ENCODE measurements at regions of chr21 and their contacts with region 1.

Region 1: GRCh38 chr21:45439161-45439872 is 34.4 kb downstream of the COL18A1 start:
- DNase-seq: peak; percentile 84 to 94 (median 90)
- H3K4me3 ChIP-seq: peak overlapping the region; percentile 26
- H3K27ac ChIP-seq: peak overlapping the region; percentile 63 to 84
- H3K4me1 ChIP-seq: peaks cover 12% of the 10 kb centered on the region
- H3K27me3 ChIP-seq: no peaks in the 10 kb centered on the region
- CTCF ChIP-seq: peak; percentile 94 to 100 (median 100)
- EP300 ChIP-seq: peak; percentile 61
- POLR2A ChIP-seq: peak; percentile 68

Region 2: DNA sequence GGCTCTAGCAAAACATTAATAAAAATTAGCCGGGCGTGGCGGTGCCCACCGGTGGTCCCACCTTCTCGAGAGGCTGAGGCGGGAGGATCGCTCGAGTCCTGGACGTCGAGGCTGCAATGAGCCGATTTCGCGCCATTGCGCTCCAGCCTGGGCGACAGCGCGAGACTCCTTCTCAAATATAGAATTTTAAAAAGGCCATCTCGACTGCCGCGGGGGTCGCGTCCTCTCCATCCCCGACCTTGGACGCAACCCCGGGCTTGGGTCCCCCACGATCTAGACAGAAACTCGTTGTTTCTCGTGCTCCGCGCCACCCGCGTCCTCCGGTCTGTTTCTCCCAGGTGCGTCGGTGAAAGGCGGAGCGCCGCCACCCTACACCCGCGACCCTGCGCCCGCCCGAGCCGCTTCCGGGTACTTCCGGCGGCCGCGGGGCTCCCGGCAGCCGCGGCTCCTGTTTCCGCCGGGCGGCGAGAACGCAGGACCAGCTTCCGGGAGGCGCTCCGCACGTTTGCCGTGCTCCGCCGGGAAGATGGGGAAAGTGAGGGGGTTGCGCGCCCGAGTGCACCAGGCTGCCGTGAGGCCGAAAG is 499.7 kb before region 1 on chr21 and contains the start of gene SLX9:
- intact Hi-C with region 1: loop called in 1 of 4 experiments (anchors 10 kb)
- DNase-seq: peak; percentile 64 to 86 (median 75)
- H3K4me3 ChIP-seq: peak within 1 kb of the TSS; percentile 82
- H3K27ac ChIP-seq: peak within 1 kb of the TSS in 1 of 2 donors; percentile 6
- H3K4me1 ChIP-seq: peaks cover 7% of the 10 kb centered on the region
- H3K27me3 ChIP-seq: no peaks in the 10 kb centered on the region
- CTCF ChIP-seq: no peak
- EP300 ChIP-seq: no peak
- POLR2A ChIP-seq: peak; percentile 67
- total RNA-seq, gene SLX9: 5.6 to 24.1 (median 17.2) TPM

Region 3: GRCh38 chr21:45152265-45152746 is 287.0 kb before region 1 on chr21:
- intact Hi-C with region 1: loop called in 2 of 4 experiments (anchors 10 kb)
- DNase-seq: no peak
- H3K4me3 ChIP-seq: no peak overlapping the region
- H3K27ac ChIP-seq: no peak overlapping the region
- H3K4me1 ChIP-seq: no peaks in the 10 kb centered on the region
- H3K27me3 ChIP-seq: no peaks in the 10 kb centered on the region
- CTCF ChIP-seq: no peak
- EP300 ChIP-seq: no peak
- POLR2A ChIP-seq: no peak

Region 4: DNA sequence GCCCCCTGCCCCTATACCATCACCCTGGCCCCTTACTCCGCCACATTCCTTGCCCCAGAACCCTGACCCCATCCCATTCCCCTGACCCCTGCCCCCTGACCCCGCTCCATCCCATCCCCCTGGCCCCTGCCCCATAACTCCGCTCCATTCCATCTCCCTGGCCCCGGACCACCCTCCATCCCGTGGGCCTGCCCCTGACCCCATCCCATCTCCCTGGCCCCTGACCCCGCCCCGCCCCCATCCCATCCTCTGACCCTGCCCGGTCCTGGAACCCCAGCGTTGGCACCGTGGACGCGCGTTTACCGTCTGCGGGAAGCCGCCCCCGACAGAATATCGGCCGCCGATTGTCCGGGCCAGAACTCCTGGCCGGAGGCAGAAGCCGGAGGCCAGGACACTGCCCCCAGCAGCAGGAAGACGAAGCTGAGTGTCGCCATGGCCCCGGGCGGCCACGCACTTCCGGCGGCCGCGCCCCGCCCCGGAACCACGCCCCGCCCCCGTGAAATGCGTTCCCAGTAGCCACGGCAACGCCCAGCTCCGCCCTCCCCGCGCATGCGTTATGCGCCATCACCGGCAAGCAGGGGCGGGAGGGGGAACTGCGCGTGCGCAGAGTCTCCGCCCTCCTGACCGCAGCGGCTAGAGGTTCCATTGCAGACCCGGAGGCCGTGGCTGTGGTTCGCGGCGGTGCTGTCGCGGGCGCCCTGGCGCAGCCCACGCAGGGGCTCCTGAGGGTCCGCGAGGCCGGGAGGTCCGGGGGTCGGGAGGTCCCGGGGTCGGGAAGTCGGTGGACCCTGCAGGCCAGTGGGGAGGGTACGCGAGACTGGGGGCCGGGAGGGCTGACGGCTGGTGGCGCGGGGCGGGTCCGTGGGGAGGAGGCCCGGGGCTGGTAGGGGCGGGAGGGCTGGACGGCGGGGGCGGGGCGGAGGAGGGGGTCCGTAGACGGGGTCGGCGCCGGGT is 151.6 kb before region 1 on chr21 and contains the start of gene POFUT2:
- intact Hi-C with region 1: loop called in 3 of 4 experiments (anchors 1 to 2 kb)
- DNase-seq: peak; percentile 97 to 99 (median 99)
- H3K4me3 ChIP-seq: peak within 1 kb of the TSS; percentile 79
- H3K27ac ChIP-seq: peak within 1 kb of the TSS; percentile 30 to 53
- H3K4me1 ChIP-seq: peaks cover 10% of the 10 kb centered on the region
- H3K27me3 ChIP-seq: no peaks in the 10 kb centered on the region
- CTCF ChIP-seq: no peak
- EP300 ChIP-seq: no peak
- POLR2A ChIP-seq: peak; percentile 82
- total RNA-seq, gene POFUT2: 26.2 to 48.2 (median 40.1) TPM

Region 5: GRCh38 chr21:45294509-45295291 is 144.6 kb before region 1 on chr21:
- intact Hi-C with region 1: loop called (anchors 1 to 2 kb)
- DNase-seq: peak; percentile 96 to 98 (median 97)
- H3K4me3 ChIP-seq: no peak overlapping the region
- H3K27ac ChIP-seq: peak overlapping the region; percentile 95 to 97
- H3K4me1 ChIP-seq: peaks cover 34% of the 10 kb centered on the region
- H3K27me3 ChIP-seq: no peaks in the 10 kb centered on the region
- CTCF ChIP-seq: peak in 2 of 3 donors; percentile 3 to 22
- EP300 ChIP-seq: peak; percentile 94
- POLR2A ChIP-seq: peak; percentile 26

Region 6: DNA sequence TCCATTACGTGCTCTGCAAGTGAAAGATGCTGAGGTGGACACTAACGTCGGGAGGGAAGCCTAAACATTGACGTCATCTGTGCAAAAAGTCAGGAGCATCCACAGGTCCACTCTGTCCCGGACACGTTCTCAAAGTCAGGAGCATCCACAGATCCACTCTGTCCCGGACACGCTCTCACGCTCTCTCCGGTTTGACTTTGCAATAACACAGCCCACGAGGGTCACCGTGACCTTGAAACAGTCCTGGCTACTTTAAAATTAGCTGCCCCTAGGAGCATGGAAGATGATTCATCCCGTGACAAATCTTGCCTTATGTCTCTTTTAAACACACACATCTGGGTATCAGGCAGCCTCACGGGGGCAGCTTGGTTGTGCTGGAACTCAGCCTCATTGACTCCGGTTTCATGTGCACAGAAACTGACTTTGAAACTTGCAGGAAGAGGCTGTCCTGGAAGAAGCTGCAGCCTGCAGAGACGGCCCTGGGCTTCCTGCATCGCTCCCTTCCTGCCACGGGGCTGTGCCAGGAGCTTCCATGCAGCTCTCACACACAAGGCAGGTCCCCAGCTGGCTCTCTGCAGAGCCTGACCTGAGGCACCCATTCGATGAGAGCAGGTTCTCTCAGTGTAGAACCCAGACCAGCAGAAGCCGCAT is 52.5 kb before region 1 on chr21:
- intact Hi-C with region 1: loop called in 2 of 4 experiments (anchors 10 kb)
- DNase-seq: peak; percentile 83 to 92 (median 88)
- H3K4me3 ChIP-seq: no peak overlapping the region
- H3K27ac ChIP-seq: peak overlapping the region; percentile 75 to 79
- H3K4me1 ChIP-seq: peaks cover 24% of the 10 kb centered on the region
- H3K27me3 ChIP-seq: no peaks in the 10 kb centered on the region
- CTCF ChIP-seq: peak; percentile 14 to 68 (median 61)
- EP300 ChIP-seq: peak; percentile 75
- POLR2A ChIP-seq: no peak